HepG2 (cell line): ENCODE measurements at regions of chr1 and their contacts with region 1.

Region 1: DNA sequence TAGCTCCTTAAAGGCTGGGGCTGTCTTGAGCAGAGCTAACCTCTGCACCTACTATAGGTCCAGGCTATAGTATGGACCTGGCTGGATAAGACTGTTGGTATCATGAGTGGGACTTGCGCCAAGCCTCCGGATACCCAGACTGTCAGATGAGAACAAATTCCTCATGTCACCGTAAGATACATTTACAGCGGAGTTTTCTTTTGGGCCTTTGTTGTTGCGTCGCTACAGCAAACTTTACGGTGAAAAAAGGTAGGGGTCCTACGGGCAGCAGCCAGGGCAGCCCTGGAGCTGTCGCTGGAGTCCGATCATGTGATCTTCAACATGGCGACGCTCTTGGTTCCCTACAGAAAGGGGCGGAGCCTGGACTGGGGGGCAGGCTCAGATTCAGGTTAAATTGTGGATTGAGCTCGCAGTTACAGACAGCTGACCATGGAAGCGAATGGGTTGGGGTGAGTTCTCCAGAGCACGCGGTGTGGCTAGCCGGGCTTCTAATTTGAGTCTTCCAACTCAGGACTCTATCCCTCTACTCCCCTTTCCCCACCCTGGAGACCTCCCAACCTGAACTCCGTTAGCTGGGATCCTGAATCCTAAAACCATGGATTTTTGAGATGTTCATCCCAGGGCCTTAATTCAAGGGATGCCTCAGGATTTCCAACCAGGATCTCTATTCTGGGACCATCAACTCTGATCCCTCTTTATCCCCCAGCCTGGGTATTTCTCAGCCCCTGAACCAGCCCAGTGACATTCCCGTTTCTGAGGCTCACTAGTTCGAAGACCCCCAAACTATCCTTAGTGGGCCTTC is at the start of gene UROD:
- DNase-seq: peak; percentile 94
- ATAC-seq: peak; percentile 75
- H3K4me3 ChIP-seq: peak within 1 kb of the TSS; percentile 73 to 95 (median 78)
- H3K27ac ChIP-seq: peak within 1 kb of the TSS; percentile 85
- H3K4me1 ChIP-seq: peaks cover 32% of the 10 kb centered on the region
- H3K27me3 ChIP-seq: no peaks in the 10 kb centered on the region; a peak in 1 of 5 replicates
- CTCF ChIP-seq: peak; percentile 4; the same call in 1 of the 2 replicates
- EP300 ChIP-seq: 0 out of 4 replicates have a peak, but pooled peaks of 1 of the 2 experiments have one; percentile 12
- POLR2A ChIP-seq: peak; percentile 91 to 96
- RAD21 ChIP-seq: no peak
- total RNA-seq, gene UROD: 171 and 243 TPM in 2 replicates

Region 2: DNA sequence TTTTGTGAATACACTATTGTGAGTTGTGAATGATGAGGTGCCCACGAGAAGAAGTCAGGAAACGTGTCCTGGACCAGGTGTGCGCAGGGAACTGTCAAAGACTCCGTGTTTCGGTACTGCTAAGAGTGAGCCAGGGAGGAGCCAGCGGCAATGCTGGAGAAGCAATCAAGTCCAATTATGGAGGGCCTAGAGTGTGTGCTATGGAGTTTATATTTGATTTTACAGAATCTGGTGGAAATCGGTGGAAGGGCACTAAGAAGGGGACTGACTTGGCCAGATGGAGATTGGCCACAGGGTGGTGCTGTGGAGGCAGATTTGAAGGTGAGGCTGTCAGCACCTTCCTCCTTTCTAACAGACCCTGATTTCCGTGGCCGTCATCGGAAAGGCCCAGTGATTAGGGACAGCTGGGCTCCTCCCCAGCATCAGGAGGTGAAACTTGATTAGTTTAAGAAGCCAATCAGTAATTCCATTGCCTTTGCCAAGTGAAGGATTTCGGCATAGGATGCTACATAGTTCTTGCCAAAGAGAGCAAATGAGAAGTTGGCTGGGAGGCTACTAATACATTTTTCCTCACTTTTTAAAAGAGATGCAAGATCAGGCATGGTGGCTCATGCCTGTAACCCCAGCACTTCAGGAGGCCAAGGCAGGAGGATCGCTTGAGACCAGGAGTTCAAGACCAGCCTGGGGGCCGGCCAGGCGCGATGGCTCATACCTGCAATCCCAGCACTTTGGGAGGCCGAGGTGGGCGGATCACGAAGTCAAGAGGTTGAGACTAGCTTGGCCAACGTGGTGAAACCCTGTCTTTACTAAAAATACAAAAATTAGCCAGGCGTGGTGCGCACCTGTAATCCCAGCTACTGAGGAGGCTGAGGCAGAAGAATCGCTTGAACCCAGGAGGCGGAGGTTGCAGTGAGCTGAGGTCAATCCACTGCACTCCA is 176.0 kb before region 1 on chr1:
- CTCF ChIA-PET with region 1: no interaction called
- POLR2A ChIA-PET with region 1: interaction called, 3 read pairs
- in situ Hi-C with region 1: loop called (anchors 25 kb)
- intact Hi-C with region 1: loop called (anchors 5 kb)
- DNase-seq: peak; percentile 65
- ATAC-seq: peak; percentile 70
- H3K4me3 ChIP-seq: peak overlapping the region in 1 of 3 experiments; percentile 26; a peak in 1 of 6 replicates
- H3K27ac ChIP-seq: no peak overlapping the region
- H3K4me1 ChIP-seq: peaks cover 60% of the 10 kb centered on the region
- H3K27me3 ChIP-seq: peaks cover 0 to 16% of the 10 kb centered on the region in 2 experiments; a peak in 1 of 5 replicates
- CTCF ChIP-seq: peak; percentile 91
- EP300 ChIP-seq: no peak
- POLR2A ChIP-seq: no peak
- RAD21 ChIP-seq: peak; percentile 71; the same call in 1 of the 2 replicates

Region 3: DNA sequence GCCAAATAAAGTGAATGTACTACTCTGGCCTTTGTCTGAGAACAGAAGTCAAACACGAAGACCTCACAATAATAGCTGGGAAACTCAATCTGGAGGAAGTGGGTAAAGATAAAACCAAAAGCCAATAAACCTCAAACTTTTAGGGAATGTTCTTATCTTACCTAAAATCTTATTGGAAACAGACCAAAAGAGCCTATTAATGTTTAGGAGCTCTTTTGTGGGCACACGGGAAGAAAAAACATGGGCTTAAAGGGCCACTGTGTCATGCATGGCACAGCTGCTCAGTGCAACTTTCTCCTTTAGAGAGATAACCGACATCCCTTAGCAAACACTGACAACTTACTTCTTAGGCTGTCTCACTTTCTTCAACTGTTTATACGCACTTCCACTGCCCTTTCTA is 41.7 kb before region 1 on chr1:
- CTCF ChIA-PET with region 1: no interaction called
- POLR2A ChIA-PET with region 1: no interaction called
- in situ Hi-C with region 1: no loop called
- intact Hi-C with region 1: no loop called
- DNase-seq: no peak
- ATAC-seq: no peak
- H3K4me3 ChIP-seq: no peak overlapping the region
- H3K27ac ChIP-seq: no peak overlapping the region
- H3K4me1 ChIP-seq: no peaks in the 10 kb centered on the region
- H3K27me3 ChIP-seq: no peaks in the 10 kb centered on the region
- CTCF ChIP-seq: no peak
- EP300 ChIP-seq: no peak
- POLR2A ChIP-seq: no peak
- RAD21 ChIP-seq: no peak

Region 4: GRCh38 chr1:44985747-44986359 is 26.2 kb before region 1 on chr1:
- CTCF ChIA-PET with region 1: no interaction called
- POLR2A ChIA-PET with region 1: interaction called, 34 read pairs
- in situ Hi-C with region 1: no loop called
- intact Hi-C with region 1: no loop called
- DNase-seq: no peak
- ATAC-seq: peak; percentile 51
- H3K4me3 ChIP-seq: peak overlapping the region; percentile 62 to 87 (median 79)
- H3K27ac ChIP-seq: peak overlapping the region; percentile 45
- H3K4me1 ChIP-seq: peaks cover 15% of the 10 kb centered on the region
- H3K27me3 ChIP-seq: no peaks in the 10 kb centered on the region; a peak in 1 of 5 replicates
- CTCF ChIP-seq: no peak
- EP300 ChIP-seq: no peak
- POLR2A ChIP-seq: no peak
- RAD21 ChIP-seq: no peak

Region 5: DNA sequence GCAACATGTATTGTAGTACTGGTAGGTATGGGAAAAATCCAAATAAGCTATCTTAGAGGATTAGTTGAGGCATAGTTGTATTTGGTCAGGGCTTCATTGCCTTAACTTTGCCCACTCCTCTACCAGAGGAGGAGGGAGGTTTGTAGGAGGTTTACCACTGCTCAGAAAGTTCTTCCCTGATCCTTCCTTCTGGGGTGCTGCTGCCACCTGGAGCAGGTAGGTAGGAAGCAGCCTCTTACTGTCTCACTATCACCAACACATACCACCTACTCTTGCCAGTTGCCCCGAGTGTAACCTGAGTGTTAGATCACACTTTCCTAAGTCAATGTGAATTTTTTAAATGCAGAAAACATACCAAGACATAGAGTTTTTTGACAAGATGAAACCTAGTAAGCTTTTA is 218.5 kb after region 1 on chr1:
- CTCF ChIA-PET with region 1: no interaction called
- POLR2A ChIA-PET with region 1: no interaction called
- in situ Hi-C with region 1: loop called (anchors 10 kb)
- intact Hi-C with region 1: loop called (anchors 5 kb)
- DNase-seq: peak; percentile 34
- ATAC-seq: peak; percentile 89
- H3K4me3 ChIP-seq: no peak overlapping the region
- H3K27ac ChIP-seq: no peak overlapping the region
- H3K4me1 ChIP-seq: no peaks in the 10 kb centered on the region
- H3K27me3 ChIP-seq: peaks cover 1 to 6% of the 10 kb centered on the region in 2 experiments; a peak in 1 of 5 replicates
- CTCF ChIP-seq: peak; percentile 79
- EP300 ChIP-seq: no peak
- POLR2A ChIP-seq: no peak
- RAD21 ChIP-seq: peak; percentile 63

Region 6: DNA sequence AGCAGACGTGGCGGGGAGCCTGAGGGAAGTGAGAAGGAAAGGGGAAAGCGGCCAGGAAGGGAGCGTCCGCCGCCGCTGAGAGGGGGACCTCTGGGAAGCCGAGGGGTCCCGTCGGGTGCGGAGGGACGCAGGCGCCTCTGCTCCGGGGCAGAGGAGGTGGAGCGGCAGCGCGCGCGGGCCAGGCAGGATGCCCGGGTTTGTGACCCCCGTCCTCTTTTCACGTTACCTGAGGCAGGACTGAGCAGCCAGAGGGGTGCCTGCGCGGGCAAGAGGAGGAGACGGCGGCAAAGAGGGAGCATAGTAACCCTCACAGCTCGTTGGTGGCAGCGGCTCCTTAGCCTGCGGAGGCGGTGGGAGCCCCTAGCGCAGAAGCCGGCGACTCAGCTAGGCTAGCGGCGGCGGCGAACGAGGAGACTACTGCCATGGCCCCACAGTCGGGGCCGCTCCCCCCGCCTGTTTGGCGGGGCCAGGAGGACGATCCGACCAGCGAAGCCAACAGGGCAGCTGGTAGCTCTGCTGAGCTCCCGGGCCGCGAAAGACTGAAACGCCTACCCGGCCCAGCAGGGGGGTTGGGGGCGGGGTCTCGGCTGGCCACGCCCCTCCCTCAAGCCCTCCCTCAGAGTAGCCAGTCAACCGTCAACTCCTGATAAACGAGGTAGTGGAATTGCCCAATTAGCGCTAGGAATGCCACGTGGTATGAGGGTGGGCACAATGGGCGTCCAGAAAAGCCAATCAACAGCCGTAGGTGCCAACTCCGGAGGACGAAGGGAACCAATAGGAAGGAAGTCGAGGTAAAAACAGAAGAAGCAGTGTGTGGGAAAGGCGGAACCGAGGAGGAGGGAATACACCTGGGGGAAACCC is 478.8 kb after region 1 on chr1 and contains the start of gene TESK2:
- CTCF ChIA-PET with region 1: no interaction called
- POLR2A ChIA-PET with region 1: interaction called, 17 read pairs
- in situ Hi-C with region 1: loop called (anchors 5 kb)
- intact Hi-C with region 1: loop called (anchors 2 kb)
- DNase-seq: peak; percentile 100
- ATAC-seq: peak; percentile 93
- H3K4me3 ChIP-seq: peak within 1 kb of the TSS; percentile 90 to 98 (median 93)
- H3K27ac ChIP-seq: peak within 1 kb of the TSS; percentile 78
- H3K4me1 ChIP-seq: peaks cover 29% of the 10 kb centered on the region
- H3K27me3 ChIP-seq: no peaks in the 10 kb centered on the region; a peak in 1 of 5 replicates
- CTCF ChIP-seq: no peak; the same call in 1 of the 2 replicates
- EP300 ChIP-seq: no peak
- POLR2A ChIP-seq: peak; percentile 90
- RAD21 ChIP-seq: peak; percentile 42; the same call in 1 of the 2 replicates
- total RNA-seq, gene TESK2: 5.5 and 6.9 TPM in 2 replicates